ENCODE measurements at regions of chr18 and their contacts with region 1.

Region 1: DNA sequence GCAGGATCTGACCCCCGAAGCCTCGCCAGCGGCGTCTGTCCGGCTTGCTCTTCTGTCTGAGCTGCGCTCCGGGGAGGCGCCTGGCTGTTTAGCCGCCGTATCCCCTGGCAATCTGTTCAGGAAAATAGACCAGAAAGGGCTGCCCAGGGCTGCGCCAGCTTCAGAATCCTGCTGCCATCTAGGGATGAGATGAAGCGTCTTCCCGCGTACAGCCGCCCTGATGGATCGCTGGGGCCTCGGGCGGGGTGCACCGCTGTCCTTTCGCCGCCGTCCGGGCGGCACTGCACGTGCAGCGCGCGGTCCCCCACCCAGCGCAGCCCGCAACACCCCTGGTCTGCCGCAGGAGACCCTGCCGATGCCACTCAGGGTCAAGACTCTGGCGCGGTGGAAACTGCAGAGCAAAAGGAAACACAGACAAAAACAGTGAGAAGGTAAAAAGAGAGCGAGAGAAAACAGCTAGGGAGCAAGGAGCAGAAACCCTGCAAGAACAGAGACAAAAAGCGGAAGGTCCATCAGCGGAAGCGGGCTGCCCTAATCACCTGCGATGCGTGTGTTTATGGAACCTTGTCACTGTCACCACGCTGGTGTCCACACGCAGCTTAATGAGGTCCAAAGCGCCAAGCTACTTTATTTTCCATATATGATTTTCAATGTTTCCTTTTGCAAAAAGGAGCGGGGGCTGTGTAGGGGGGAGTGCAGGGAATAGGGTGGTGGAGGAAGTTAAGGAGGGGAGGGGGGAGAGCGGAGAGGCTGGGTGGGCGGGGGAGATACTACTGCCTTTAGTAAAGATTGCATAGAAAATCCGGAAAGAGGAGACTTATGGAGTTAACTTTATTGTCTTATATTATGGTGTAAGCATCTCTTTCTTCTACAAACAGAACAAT is 2113.3 kb upstream of the PIK3C3 start:
- DNase-seq: peak; percentile 50
- ATAC-seq: peak; percentile 86
- H3K4me3 ChIP-seq: peak overlapping the region; percentile 66
- H3K27ac ChIP-seq: no peak overlapping the region
- H3K4me1 ChIP-seq: peaks cover under 1% of the 10 kb centered on the region; the same call in 1 of the 2 replicates
- H3K27me3 ChIP-seq: peaks cover 4% of the 10 kb centered on the region
- CTCF ChIP-seq: peak; percentile 47
- POLR2A ChIP-seq: no peak
- RAD21 ChIP-seq: peak; percentile 67

Region 2: GRCh38 chr18:39486268-39486667 is 355.5 kb before region 1 on chr18:
- CTCF ChIA-PET with region 1: no interaction called
- POLR2A ChIA-PET with region 1: no interaction called
- dilution Hi-C with region 1: no loop called
- in situ Hi-C with region 1: no loop called
- intact Hi-C with region 1: loop called (anchors 10 kb)
- DNase-seq: no peak
- ATAC-seq: no peak
- H3K4me3 ChIP-seq: no peak overlapping the region
- H3K27ac ChIP-seq: no peak overlapping the region
- H3K4me1 ChIP-seq: 0 out of 2 replicates have a peak, but pooled peaks cover 1% of the 10 kb centered on the region
- H3K27me3 ChIP-seq: no peaks in the 10 kb centered on the region
- CTCF ChIP-seq: no peak
- POLR2A ChIP-seq: no peak
- RAD21 ChIP-seq: no peak

Region 3: GRCh38 chr18:39571511-39571910 is 270.2 kb before region 1 on chr18:
- CTCF ChIA-PET with region 1: no interaction called
- POLR2A ChIA-PET with region 1: no interaction called
- dilution Hi-C with region 1: no loop called
- in situ Hi-C with region 1: no loop called
- intact Hi-C with region 1: loop called (anchors 5 kb)
- DNase-seq: peak; percentile 19
- ATAC-seq: no peak
- H3K4me3 ChIP-seq: no peak overlapping the region
- H3K27ac ChIP-seq: no peak overlapping the region
- H3K4me1 ChIP-seq: no peaks in the 10 kb centered on the region
- H3K27me3 ChIP-seq: no peaks in the 10 kb centered on the region
- CTCF ChIP-seq: peak; percentile 38
- POLR2A ChIP-seq: no peak
- RAD21 ChIP-seq: peak; percentile 52

Region 4: DNA sequence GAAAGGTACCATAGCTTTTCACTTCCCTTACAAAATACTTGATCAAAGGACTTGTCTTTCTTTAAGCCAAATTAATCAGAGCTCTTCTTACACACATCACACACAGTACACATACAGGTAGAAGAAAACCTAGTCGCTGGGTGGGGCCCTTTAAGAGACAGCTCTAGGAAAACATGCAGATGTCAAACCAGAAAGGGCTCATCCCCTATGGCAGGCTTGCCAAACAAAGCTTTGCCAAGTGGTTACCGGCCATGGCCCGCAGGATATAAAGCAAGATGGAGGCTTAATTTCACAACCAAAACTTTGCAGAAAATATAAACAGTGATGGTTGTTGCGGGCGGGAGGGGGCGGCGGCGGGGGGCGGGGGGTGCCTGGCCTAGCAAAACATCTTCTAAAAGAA is 42.7 kb before region 1 on chr18:
- CTCF ChIA-PET with region 1: no interaction called
- POLR2A ChIA-PET with region 1: no interaction called
- dilution Hi-C with region 1: no loop called
- in situ Hi-C with region 1: no loop called
- intact Hi-C with region 1: no loop called
- DNase-seq: no peak
- ATAC-seq: peak; percentile 24; the same call in 1 of the 2 replicates
- H3K4me3 ChIP-seq: no peak overlapping the region
- H3K27ac ChIP-seq: no peak overlapping the region
- H3K4me1 ChIP-seq: no peaks in the 10 kb centered on the region
- H3K27me3 ChIP-seq: no peaks in the 10 kb centered on the region
- CTCF ChIP-seq: no peak
- POLR2A ChIP-seq: no peak
- RAD21 ChIP-seq: no peak

Region 5: GRCh38 chr18:40407909-40408308 is 566.2 kb after region 1 on chr18:
- CTCF ChIA-PET with region 1: no interaction called
- POLR2A ChIA-PET with region 1: no interaction called
- dilution Hi-C with region 1: no loop called
- in situ Hi-C with region 1: no loop called
- intact Hi-C with region 1: loop called (anchors 10 kb)
- DNase-seq: peak; percentile 28
- ATAC-seq: no peak
- H3K4me3 ChIP-seq: no peak overlapping the region
- H3K27ac ChIP-seq: no peak overlapping the region
- H3K4me1 ChIP-seq: no peaks in the 10 kb centered on the region
- H3K27me3 ChIP-seq: no peaks in the 10 kb centered on the region
- CTCF ChIP-seq: no peak
- POLR2A ChIP-seq: no peak
- RAD21 ChIP-seq: no peak

Region 6: DNA sequence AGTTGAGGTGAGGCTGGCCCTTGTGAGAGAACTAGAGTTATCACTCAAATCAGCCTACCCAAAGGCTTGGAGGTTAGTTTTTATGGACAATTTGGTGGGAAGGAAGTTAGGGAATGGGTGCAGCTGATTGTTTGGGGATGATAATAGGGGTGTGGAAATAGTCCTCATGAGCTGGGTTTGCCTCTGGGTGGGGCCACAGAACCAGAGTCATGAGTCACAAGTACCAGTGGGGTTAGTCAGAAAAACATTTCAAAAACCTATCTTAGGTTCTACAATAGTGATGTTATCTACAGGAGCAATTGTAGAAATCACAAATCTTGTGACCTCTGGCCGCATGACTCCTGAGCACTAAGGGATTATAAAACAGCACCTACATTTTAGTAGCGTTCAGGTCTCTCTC is 1483.2 kb after region 1 on chr18:
- CTCF ChIA-PET with region 1: no interaction called
- POLR2A ChIA-PET with region 1: no interaction called
- dilution Hi-C with region 1: no loop called
- in situ Hi-C with region 1: no loop called
- intact Hi-C with region 1: loop called (anchors 5 kb)
- DNase-seq: peak; percentile 47
- ATAC-seq: peak; percentile 48; the same call in 1 of the 2 replicates
- H3K4me3 ChIP-seq: no peak overlapping the region
- H3K27ac ChIP-seq: no peak overlapping the region
- H3K4me1 ChIP-seq: peaks cover 3% of the 10 kb centered on the region; the same call in 1 of the 2 replicates
- H3K27me3 ChIP-seq: no peaks in the 10 kb centered on the region
- CTCF ChIP-seq: no peak
- POLR2A ChIP-seq: no peak
- RAD21 ChIP-seq: no peak

Region 7: GRCh38 chr18:41391616-41392595 is 1550.2 kb after region 1 on chr18:
- CTCF ChIA-PET with region 1: no interaction called
- POLR2A ChIA-PET with region 1: no interaction called
- dilution Hi-C with region 1: no loop called
- in situ Hi-C with region 1: no loop called
- intact Hi-C with region 1: loop called (anchors 10 kb)
- DNase-seq: peak; percentile 70
- ATAC-seq: peak; percentile 96
- H3K4me3 ChIP-seq: peak overlapping the region; percentile 58
- H3K27ac ChIP-seq: peak overlapping the region; percentile 56; the same call in 1 of the 2 replicates
- H3K4me1 ChIP-seq: no peaks in the 10 kb centered on the region
- H3K27me3 ChIP-seq: no peaks in the 10 kb centered on the region
- CTCF ChIP-seq: peak; percentile 87
- POLR2A ChIP-seq: no peak
- RAD21 ChIP-seq: peak; percentile 91